Activated CD4-positive, alpha-beta T cell treated with anti-CD3 and anti-CD28 coated beads for 36 hours (primary cell): ENCODE measurements at regions of chr4 and their contacts with region 1.

Region 1: DNA sequence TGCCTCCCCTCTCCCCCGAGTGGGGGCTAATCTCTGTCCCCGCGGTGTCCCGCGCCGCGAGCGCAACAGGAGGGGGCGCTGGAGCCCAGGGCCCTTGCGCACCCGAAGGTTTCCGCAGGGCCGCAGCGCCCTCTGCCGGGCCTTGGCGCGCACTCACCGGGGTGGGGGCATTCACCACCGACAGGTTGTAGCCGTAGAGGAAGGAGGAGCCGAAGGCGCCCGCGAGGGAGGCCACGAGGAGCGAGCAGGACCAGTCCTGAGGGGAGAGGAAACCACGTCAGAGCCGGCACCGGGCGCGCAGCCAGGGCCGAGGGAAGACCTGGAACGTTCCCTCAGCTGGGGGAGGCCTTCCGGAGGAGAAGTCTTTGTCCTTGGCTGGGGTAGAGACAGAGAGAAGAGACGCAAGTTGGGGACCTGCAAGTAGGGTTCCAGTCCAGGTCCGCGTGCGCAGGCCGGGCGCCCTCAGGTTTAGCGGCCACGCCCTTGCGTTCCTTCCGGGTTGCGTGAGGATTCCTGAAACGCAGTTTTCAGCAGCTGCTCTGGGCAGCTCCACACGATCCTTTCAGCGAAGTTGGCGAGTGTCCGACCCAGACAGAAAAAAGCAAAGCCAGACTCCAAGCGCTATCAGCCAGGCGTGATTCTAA is 2.4 kb downstream of the SLC2A9 start:
- DNase-seq: peak; percentile 97
- ATAC-seq: peak; percentile 100
- H3K4me3 Mint-ChIP-seq: peak overlapping the region; percentile 77
- H3K27ac Mint-ChIP-seq: peak overlapping the region; percentile 81
- H3K4me1 Mint-ChIP-seq: peaks cover 6% of the 10 kb centered on the region
- H3K27me3 Mint-ChIP-seq: no peaks in the 10 kb centered on the region

Region 2: DNA sequence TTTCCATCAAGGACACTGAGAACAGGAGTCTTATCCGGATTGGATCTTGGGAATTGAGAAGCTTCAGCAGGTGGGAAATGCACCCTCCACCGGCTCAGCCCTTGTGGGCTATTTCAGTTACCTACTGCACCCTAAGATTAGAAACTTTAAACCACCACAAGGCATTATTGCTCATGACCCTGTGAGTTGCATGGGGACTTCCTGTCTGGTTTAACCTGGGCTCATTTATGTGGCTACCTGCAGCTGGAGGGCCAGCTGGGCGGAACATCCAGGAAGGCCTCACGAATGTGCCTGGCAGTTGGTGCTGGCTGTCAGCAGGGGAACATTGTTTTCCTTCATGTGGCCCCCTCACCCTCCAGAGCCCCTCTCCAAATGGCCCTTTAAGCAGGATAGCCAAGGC is 410.6 kb before region 1 on chr4:
- CTCF ChIA-PET with region 1: no interaction called
- POLR2A ChIA-PET with region 1: no interaction called
- intact Hi-C with region 1: loop called in 1 of 2 experiments (anchors 10 kb)
- DNase-seq: no peak
- ATAC-seq: no peak
- H3K4me3 Mint-ChIP-seq: no peak overlapping the region
- H3K27ac Mint-ChIP-seq: no peak overlapping the region
- H3K4me1 Mint-ChIP-seq: peaks cover 39% of the 10 kb centered on the region
- H3K27me3 Mint-ChIP-seq: no peaks in the 10 kb centered on the region

Region 3: DNA sequence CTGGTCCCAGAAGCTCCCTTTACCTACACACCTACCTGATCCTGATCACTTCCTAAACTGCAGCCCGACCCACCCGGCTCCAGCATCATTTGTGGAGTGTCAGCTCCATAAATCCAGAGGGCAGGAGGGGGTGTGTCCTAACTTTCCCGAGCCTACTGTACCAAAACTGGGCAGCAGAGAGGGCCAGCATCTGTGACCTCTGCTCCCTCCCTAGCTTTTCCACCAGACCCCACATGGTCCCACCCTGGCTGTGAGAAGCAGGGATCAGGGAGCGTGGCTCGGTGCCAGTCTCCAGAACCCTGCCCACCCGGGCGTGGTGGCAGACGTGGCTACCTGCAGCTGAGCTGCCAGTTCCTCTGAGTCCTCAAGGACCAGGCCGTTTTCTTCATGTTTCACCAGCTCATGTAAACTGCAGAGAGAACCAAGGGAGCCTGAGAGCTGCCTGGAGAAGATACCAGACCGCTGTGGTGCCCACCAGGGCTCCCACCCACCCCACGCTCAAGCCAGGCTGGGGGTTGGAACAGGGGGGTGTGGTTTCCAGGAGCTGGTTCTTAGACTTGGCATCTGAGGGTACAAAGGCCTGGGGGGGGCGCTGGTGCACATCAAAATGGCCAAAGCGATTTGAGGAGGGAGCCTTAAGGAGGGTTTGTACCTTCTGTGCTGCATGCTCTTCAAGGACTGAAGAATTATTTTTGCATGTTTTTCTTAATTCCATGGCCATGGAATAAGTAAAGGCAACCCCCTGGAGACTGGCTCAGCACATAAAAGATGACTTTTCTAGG is 314.2 kb before region 1 on chr4:
- CTCF ChIA-PET with region 1: interaction called, 25 read pairs
- POLR2A ChIA-PET with region 1: no interaction called
- intact Hi-C with region 1: loop called (anchors 1 kb)
- DNase-seq: peak; percentile 17
- ATAC-seq: no peak
- H3K4me3 Mint-ChIP-seq: no peak overlapping the region
- H3K27ac Mint-ChIP-seq: no peak overlapping the region
- H3K4me1 Mint-ChIP-seq: peaks cover 5% of the 10 kb centered on the region
- H3K27me3 Mint-ChIP-seq: no peaks in the 10 kb centered on the region

Region 4: GRCh38 chr4:10116580-10117358 is 97.8 kb after region 1 on chr4 and contains the start of gene WDR1:
- CTCF ChIA-PET with region 1: no interaction called
- POLR2A ChIA-PET with region 1: no interaction called
- intact Hi-C with region 1: loop called in 1 of 2 experiments (anchors 2 kb)
- DNase-seq: peak; percentile 93
- ATAC-seq: peak; percentile 79
- H3K4me3 Mint-ChIP-seq: peak within 1 kb of the TSS; percentile 96
- H3K27ac Mint-ChIP-seq: peak within 1 kb of the TSS; percentile 100
- H3K4me1 Mint-ChIP-seq: peaks cover 73% of the 10 kb centered on the region
- H3K27me3 Mint-ChIP-seq: no peaks in the 10 kb centered on the region
- total RNA-seq, gene WDR1: 308 to 354 TPM

Region 5: DNA sequence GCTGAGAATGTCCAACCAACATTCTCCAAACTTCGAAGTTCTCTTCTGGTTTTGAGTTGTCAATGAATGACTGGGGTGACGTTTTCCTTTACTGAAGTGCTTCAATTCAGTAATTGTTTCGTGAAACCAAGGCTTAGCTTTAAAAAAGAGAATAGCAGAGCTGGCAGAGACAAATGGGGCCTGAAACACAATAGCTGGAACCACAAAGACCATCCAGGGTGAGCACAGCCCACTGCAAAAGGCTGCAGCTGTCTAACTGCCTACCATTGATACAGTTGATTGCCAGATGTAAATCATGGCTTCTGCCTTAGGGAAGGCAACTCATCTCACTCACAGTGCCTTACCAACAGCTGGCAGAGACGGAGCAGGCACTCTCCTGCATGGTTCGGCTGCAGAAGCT is 517.0 kb after region 1 on chr4:
- CTCF ChIA-PET with region 1: no interaction called
- POLR2A ChIA-PET with region 1: interaction called, 3 read pairs
- intact Hi-C with region 1: loop called in 1 of 2 experiments (anchors 2 kb)
- DNase-seq: no peak
- ATAC-seq: no peak
- H3K4me3 Mint-ChIP-seq: no peak overlapping the region
- H3K27ac Mint-ChIP-seq: no peak overlapping the region
- H3K4me1 Mint-ChIP-seq: no peaks in the 10 kb centered on the region
- H3K27me3 Mint-ChIP-seq: no peaks in the 10 kb centered on the region

Region 6: DNA sequence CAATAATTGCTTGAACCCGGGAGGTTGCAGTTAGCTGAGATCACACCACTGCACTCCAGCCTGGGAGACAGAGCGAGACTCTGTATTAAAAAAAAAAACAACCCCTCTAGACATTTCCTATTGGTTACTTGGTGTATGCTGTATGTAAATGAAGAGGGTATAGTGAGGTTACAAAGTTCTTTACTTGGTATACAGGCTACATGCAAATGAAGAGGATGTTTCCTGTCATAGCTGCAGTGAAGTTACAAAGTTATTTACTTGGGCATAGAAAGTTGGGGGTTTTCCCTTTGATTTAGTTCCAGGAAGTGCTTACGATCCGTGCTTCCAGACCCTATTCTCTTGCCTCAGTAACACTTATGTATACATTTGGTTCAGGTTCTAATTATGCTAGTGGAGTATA is 704.0 kb after region 1 on chr4:
- CTCF ChIA-PET with region 1: no interaction called
- POLR2A ChIA-PET with region 1: no interaction called
- intact Hi-C with region 1: no loop called
- DNase-seq: no peak
- ATAC-seq: peak; percentile 94
- H3K4me3 Mint-ChIP-seq: no peak overlapping the region
- H3K27ac Mint-ChIP-seq: no peak overlapping the region
- H3K4me1 Mint-ChIP-seq: peaks cover 28% of the 10 kb centered on the region
- H3K27me3 Mint-ChIP-seq: peaks cover 2% of the 10 kb centered on the region